Gastrocnemius medialis (tissue), 4 donors: ENCODE measurements at regions of chr5 and their contacts with region 1.

Region 1: GRCh38 chr5:59506285-59506877 is 387.1 kb downstream of the PDE4D start:
- DNase-seq: no peak
- ATAC-seq: no peak
- H3K4me3 ChIP-seq: no peak overlapping the region
- H3K27ac ChIP-seq: peak overlapping the region in 3 of 4 donors; percentile 12 to 60 (median 57)
- H3K4me1 ChIP-seq: peaks cover 31 to 39% of the 10 kb centered on the region in 2 donors
- H3K27me3 ChIP-seq: no peaks in the 10 kb centered on the region
- CTCF ChIP-seq: peak; percentile 28 to 60 (median 50)
- POLR2A ChIP-seq: no peak

Region 2: GRCh38 chr5:59188419-59189225 is 317.8 kb before region 1 on chr5:
- in situ Hi-C with region 1: no loop called
- intact Hi-C with region 1: loop called (anchors 10 kb)
- DNase-seq: peak; percentile 55 to 69
- ATAC-seq: peak; percentile 40 to 53
- H3K4me3 ChIP-seq: peak overlapping the region; percentile 40 to 46 (median 40)
- H3K27ac ChIP-seq: peak overlapping the region; percentile 53 to 70 (median 60)
- H3K4me1 ChIP-seq: peaks cover 41 to 64% of the 10 kb centered on the region in 2 donors
- H3K27me3 ChIP-seq: no peaks in the 10 kb centered on the region
- CTCF ChIP-seq: peak; percentile 81 to 87 (median 83)
- POLR2A ChIP-seq: no peak

Region 3: GRCh38 chr5:59231221-59231931 is 275.0 kb before region 1 on chr5:
- in situ Hi-C with region 1: no loop called
- intact Hi-C with region 1: no loop called
- DNase-seq: no peak
- ATAC-seq: peak in 1 of 2 donors; percentile 21
- H3K4me3 ChIP-seq: no peak overlapping the region
- H3K27ac ChIP-seq: peak overlapping the region in 3 of 4 donors; percentile 3 to 20 (median 14)
- H3K4me1 ChIP-seq: peaks cover 24 to 46% of the 10 kb centered on the region in 2 donors
- H3K27me3 ChIP-seq: no peaks in the 10 kb centered on the region
- CTCF ChIP-seq: no peak
- POLR2A ChIP-seq: no peak

Region 4: GRCh38 chr5:59460368-59461153 is 45.8 kb before region 1 on chr5:
- in situ Hi-C with region 1: no loop called
- intact Hi-C with region 1: no loop called
- DNase-seq: no peak
- ATAC-seq: peak; percentile 68 to 80
- H3K4me3 ChIP-seq: no peak overlapping the region
- H3K27ac ChIP-seq: peak overlapping the region; percentile 15 to 78 (median 47)
- H3K4me1 ChIP-seq: peaks cover 29 to 37% of the 10 kb centered on the region in 2 donors
- H3K27me3 ChIP-seq: no peaks in the 10 kb centered on the region
- CTCF ChIP-seq: no peak
- POLR2A ChIP-seq: no peak

Region 5: DNA sequence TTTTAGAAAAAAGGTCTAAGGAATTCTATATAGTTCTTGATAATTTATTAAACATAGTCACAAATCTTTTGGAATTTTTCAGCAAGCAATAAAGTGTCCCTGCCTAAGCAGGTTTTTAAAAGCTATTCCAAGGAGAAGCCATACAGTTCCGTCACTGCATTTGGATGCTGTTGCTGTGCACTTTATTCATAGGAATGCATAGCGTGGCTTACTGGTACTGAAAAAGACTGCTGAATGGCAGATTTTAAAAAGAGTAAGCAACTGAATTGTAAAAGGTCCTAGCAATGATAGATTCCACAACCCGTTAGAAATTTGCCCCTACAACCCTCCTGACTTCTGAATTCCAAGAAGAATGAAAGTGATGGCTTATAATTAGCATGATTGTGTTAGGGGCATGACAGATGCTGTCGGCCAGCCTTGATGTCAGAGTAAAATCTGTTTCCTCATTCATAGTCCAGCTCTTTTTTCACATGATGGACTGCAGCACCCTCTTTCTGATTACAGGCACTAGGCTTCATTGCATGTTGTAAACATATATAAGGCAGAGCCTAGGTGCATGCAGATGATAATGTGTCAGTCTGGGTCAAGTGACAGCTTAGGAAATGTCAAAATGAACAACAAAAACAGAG is 160.2 kb after region 1 on chr5:
- in situ Hi-C with region 1: loop called in 3 of 4 experiments (anchors 10 kb)
- intact Hi-C with region 1: loop called (anchors 2 kb)
- DNase-seq: no peak
- ATAC-seq: peak; percentile 74 to 76
- H3K4me3 ChIP-seq: no peak overlapping the region
- H3K27ac ChIP-seq: peak overlapping the region; percentile 69 to 82 (median 80)
- H3K4me1 ChIP-seq: peaks cover 35 to 42% of the 10 kb centered on the region in 2 donors
- H3K27me3 ChIP-seq: no peaks in the 10 kb centered on the region
- CTCF ChIP-seq: peak in 4 of 5 experiments; percentile 29 to 55 (median 45)
- POLR2A ChIP-seq: no peak

Region 6: GRCh38 chr5:59673438-59674058 is 167.2 kb after region 1 on chr5:
- in situ Hi-C with region 1: loop called in 3 of 4 experiments (anchors 10 kb)
- intact Hi-C with region 1: loop called (anchors 2 kb)
- DNase-seq: no peak
- ATAC-seq: peak; percentile 43 to 60
- H3K4me3 ChIP-seq: no peak overlapping the region
- H3K27ac ChIP-seq: no peak overlapping the region
- H3K4me1 ChIP-seq: peaks cover 6% of the 10 kb centered on the region in 2 donors
- H3K27me3 ChIP-seq: no peaks in the 10 kb centered on the region
- CTCF ChIP-seq: peak; percentile 73 to 82 (median 77)
- POLR2A ChIP-seq: no peak

Region 7: GRCh38 chr5:59757442-59757841 is 251.1 kb after region 1 on chr5:
- in situ Hi-C with region 1: no loop called
- intact Hi-C with region 1: no loop called
- DNase-seq: no peak
- ATAC-seq: no peak
- H3K4me3 ChIP-seq: no peak overlapping the region
- H3K27ac ChIP-seq: no peak overlapping the region
- H3K4me1 ChIP-seq: no peaks in the 10 kb centered on the region
- H3K27me3 ChIP-seq: no peaks in the 10 kb centered on the region
- CTCF ChIP-seq: no peak
- POLR2A ChIP-seq: no peak